Natural killer cell (primary cell): ENCODE measurements at regions of chr6 and their contacts with region 1.

Region 1: GRCh38 chr6:41735427-41736356 is at the start of gene TFEB:
- DNase-seq: peak; percentile 96
- ATAC-seq: peak; percentile 50 to 79 (median 63)
- H3K4me3 ChIP-seq: peak within 1 kb of the TSS; percentile 74
- H3K4me3 Mint-ChIP-seq: peak within 1 kb of the TSS; percentile 81
- H3K27ac ChIP-seq: peak within 1 kb of the TSS; percentile 89
- H3K27ac Mint-ChIP-seq: peak within 1 kb of the TSS; percentile 88 to 95
- H3K4me1 ChIP-seq: peaks cover 38% of the 10 kb centered on the region
- H3K4me1 Mint-ChIP-seq: peaks cover 23 to 30% of the 10 kb centered on the region in 2 donors
- H3K27me3 ChIP-seq: no peaks in the 10 kb centered on the region
- H3K27me3 Mint-ChIP-seq: no peaks in the 10 kb centered on the region
- CTCF ChIP-seq: peak; percentile 72
- total RNA-seq, gene TFEB: 56.0 to 66.7 (median 66.2) TPM

Region 2: GRCh38 chr6:41072676-41073623 is 662.7 kb before region 1 on chr6 and contains the start of gene NFYA:
- intact Hi-C with region 1: loop called (anchors 2 kb)
- DNase-seq: peak; percentile 100
- ATAC-seq: peak; percentile 68 to 85 (median 71)
- H3K4me3 ChIP-seq: peak within 1 kb of the TSS; percentile 99
- H3K4me3 Mint-ChIP-seq: peak within 1 kb of the TSS; percentile 92
- H3K27ac ChIP-seq: peak within 1 kb of the TSS; percentile 99
- H3K27ac Mint-ChIP-seq: peak within 1 kb of the TSS; percentile 94 to 98
- H3K4me1 ChIP-seq: peaks cover 9% of the 10 kb centered on the region
- H3K4me1 Mint-ChIP-seq: peaks cover 46 to 51% of the 10 kb centered on the region in 2 donors
- H3K27me3 ChIP-seq: no peaks in the 10 kb centered on the region
- H3K27me3 Mint-ChIP-seq: no peaks in the 10 kb centered on the region
- CTCF ChIP-seq: peak; percentile 58
- total RNA-seq, gene NFYA: 27.5 to 33.1 (median 33.0) TPM

Region 3: GRCh38 chr6:41697861-41698781 is 37.6 kb before region 1 on chr6:
- intact Hi-C with region 1: loop called (anchors 5 kb)
- DNase-seq: no peak
- ATAC-seq: no peak
- H3K4me3 ChIP-seq: no peak overlapping the region
- H3K4me3 Mint-ChIP-seq: no peak overlapping the region
- H3K27ac ChIP-seq: no peak overlapping the region
- H3K27ac Mint-ChIP-seq: peak overlapping the region; percentile 74 to 82
- H3K4me1 ChIP-seq: peaks cover 29% of the 10 kb centered on the region
- H3K4me1 Mint-ChIP-seq: peaks cover 38 to 51% of the 10 kb centered on the region in 2 donors
- H3K27me3 ChIP-seq: no peaks in the 10 kb centered on the region
- H3K27me3 Mint-ChIP-seq: no peaks in the 10 kb centered on the region
- CTCF ChIP-seq: no peak

Region 4: GRCh38 chr6:41705996-41706835 is 29.5 kb before region 1 on chr6:
- intact Hi-C with region 1: loop called (anchors 1 kb)
- DNase-seq: peak; percentile 74 to 79
- ATAC-seq: peak; percentile 91 to 96 (median 93)
- H3K4me3 ChIP-seq: no peak overlapping the region
- H3K4me3 Mint-ChIP-seq: peak overlapping the region; percentile 19
- H3K27ac ChIP-seq: peak overlapping the region; percentile 79
- H3K27ac Mint-ChIP-seq: peak overlapping the region; percentile 92 to 93
- H3K4me1 ChIP-seq: peaks cover 52% of the 10 kb centered on the region
- H3K4me1 Mint-ChIP-seq: peaks cover 50 to 78% of the 10 kb centered on the region in 2 donors
- H3K27me3 ChIP-seq: no peaks in the 10 kb centered on the region
- H3K27me3 Mint-ChIP-seq: no peaks in the 10 kb centered on the region
- CTCF ChIP-seq: peak; percentile 77

Region 5: GRCh38 chr6:41723530-41724227 is 12.0 kb before region 1 on chr6:
- intact Hi-C with region 1: loop called (anchors 1 kb)
- DNase-seq: peak; percentile 31 to 54
- ATAC-seq: peak; percentile 67 to 83 (median 68)
- H3K4me3 ChIP-seq: peak overlapping the region; percentile 11
- H3K4me3 Mint-ChIP-seq: peak overlapping the region; percentile 86
- H3K27ac ChIP-seq: peak overlapping the region; percentile 95
- H3K27ac Mint-ChIP-seq: peak overlapping the region; percentile 88 to 95
- H3K4me1 ChIP-seq: peaks cover 86% of the 10 kb centered on the region
- H3K4me1 Mint-ChIP-seq: peaks cover 49 to 83% of the 10 kb centered on the region in 2 donors
- H3K27me3 ChIP-seq: no peaks in the 10 kb centered on the region
- H3K27me3 Mint-ChIP-seq: no peaks in the 10 kb centered on the region
- CTCF ChIP-seq: no peak

Region 6: DNA sequence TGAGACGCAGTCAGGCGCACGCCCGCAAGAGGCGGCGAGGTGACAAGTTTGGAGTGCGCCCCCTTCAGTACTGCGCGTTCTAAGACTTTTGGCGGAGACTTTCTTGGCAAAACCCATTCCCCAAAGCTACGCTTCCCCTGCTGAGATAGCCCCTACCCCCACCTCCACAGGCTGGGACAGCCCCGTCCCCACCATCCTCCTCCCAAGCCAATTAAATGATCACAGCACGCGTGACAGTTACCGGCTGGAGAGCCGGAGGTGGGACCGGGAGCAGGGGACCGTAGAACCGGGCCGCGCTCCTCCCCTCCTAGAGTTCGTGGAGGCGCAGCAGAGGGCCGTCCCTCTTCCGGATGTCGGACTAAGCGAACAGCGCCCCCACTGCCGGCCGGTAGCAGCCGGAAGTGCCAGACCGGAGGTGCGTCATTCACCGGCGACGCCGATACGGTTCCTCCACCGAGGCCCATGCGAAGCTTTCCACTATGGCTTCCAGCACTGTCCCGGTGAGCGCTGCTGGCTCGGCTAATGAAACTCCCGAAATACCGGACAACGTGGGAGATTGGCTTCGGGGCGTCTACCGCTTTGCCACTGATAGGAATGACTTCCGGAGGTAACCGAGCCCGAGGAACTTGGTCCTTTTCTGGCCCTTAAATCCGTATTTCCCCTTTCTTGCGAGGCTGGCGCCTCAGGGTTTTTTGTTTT is 51.7 kb after region 1 on chr6 and contains the start of gene TOMM6:
- intact Hi-C with region 1: loop called (anchors 2 kb)
- DNase-seq: peak; percentile 93 to 97
- ATAC-seq: peak; percentile 79 to 92 (median 84)
- H3K4me3 ChIP-seq: peak within 1 kb of the TSS; percentile 86
- H3K4me3 Mint-ChIP-seq: peak within 1 kb of the TSS; percentile 94
- H3K27ac ChIP-seq: peak within 1 kb of the TSS; percentile 92
- H3K27ac Mint-ChIP-seq: peak within 1 kb of the TSS; percentile 92 to 96
- H3K4me1 ChIP-seq: peaks cover 30% of the 10 kb centered on the region
- H3K4me1 Mint-ChIP-seq: peaks cover 0 to 25% of the 10 kb centered on the region in 2 donors
- H3K27me3 ChIP-seq: no peaks in the 10 kb centered on the region
- H3K27me3 Mint-ChIP-seq: no peaks in the 10 kb centered on the region
- CTCF ChIP-seq: peak; percentile 95
- total RNA-seq, gene TOMM6: 95.0 to 109 (median 96.6) TPM

Region 7: DNA sequence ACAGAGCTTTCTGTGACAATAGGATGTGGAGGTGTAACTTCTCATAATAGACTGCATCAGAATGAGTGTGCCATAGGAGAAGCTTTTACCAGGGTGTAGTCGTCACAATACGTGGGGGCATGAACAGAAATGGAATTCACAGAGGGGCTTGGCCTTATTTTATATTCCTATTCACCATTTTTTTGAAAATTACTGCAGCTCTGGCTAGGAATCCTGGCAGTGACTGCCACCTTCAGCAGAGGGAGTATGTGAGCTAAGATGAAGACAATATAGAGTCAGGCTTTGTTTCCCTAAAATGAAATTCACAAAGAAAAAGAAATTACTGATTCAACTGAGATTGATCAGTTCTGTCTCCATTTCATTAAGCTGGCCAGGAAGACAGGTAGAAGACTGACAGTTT is 65.7 kb after region 1 on chr6:
- intact Hi-C with region 1: no loop called
- DNase-seq: peak in 1 of 2 donors; percentile 19
- ATAC-seq: no peak
- H3K4me3 ChIP-seq: no peak overlapping the region
- H3K4me3 Mint-ChIP-seq: no peak overlapping the region
- H3K27ac ChIP-seq: no peak overlapping the region
- H3K27ac Mint-ChIP-seq: no peak overlapping the region
- H3K4me1 ChIP-seq: no peaks in the 10 kb centered on the region
- H3K4me1 Mint-ChIP-seq: no peaks in the 10 kb centered on the region
- H3K27me3 ChIP-seq: no peaks in the 10 kb centered on the region
- H3K27me3 Mint-ChIP-seq: no peaks in the 10 kb centered on the region
- CTCF ChIP-seq: no peak

Region 8: GRCh38 chr6:42217519-42218367 is 482.1 kb after region 1 on chr6 and contains the start of gene MRPS10:
- intact Hi-C with region 1: loop called (anchors 1 kb)
- DNase-seq: peak; percentile 83 to 95
- ATAC-seq: peak; percentile 100
- H3K4me3 ChIP-seq: peak within 1 kb of the TSS; percentile 81
- H3K4me3 Mint-ChIP-seq: peak within 1 kb of the TSS; percentile 100
- H3K27ac ChIP-seq: peak within 1 kb of the TSS; percentile 66
- H3K27ac Mint-ChIP-seq: peak within 1 kb of the TSS; percentile 97 to 98
- H3K4me1 ChIP-seq: peaks cover 21% of the 10 kb centered on the region
- H3K4me1 Mint-ChIP-seq: peaks cover 11 to 19% of the 10 kb centered on the region in 2 donors
- H3K27me3 ChIP-seq: no peaks in the 10 kb centered on the region
- H3K27me3 Mint-ChIP-seq: no peaks in the 10 kb centered on the region
- CTCF ChIP-seq: no peak
- total RNA-seq, gene MRPS10: 21.8 to 25.4 (median 22.6) TPM